Endothelial cell of umbilical vein (primary cell): ENCODE measurements at regions of chr1 and their contacts with region 1.

Region 1: GRCh38 chr1:96236156-96236739 is 485.3 kb upstream of the PTBP2 start:
- DNase-seq: peak; percentile 80
- H3K4me3 ChIP-seq: no peak overlapping the region
- H3K27ac ChIP-seq: no peak overlapping the region
- H3K4me1 ChIP-seq: peaks cover 3% of the 10 kb centered on the region
- H3K27me3 ChIP-seq: peaks cover 2% of the 10 kb centered on the region in 2 experiments
- CTCF ChIP-seq: peak; percentile 40 to 49
- POLR2A ChIP-seq: no peak

Region 2: DNA sequence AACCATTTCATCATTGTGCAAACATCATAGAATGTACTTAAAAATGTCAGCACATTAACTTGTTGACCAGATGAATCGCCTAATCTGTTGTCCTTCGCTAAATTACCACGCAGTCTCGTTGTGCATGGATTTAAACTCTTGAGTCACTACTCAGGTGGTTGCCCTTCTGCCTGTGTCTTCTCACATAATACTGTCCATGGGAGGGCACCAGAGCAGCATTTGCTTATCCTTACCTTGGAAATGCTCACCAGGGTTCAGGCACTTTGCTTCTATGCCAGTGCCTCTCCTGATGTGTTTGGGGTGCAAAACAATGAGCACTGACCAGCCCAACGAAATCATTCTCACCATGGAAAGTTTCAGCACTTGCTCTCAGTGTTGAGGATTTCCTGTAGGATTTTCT is 442.4 kb before region 1 on chr1:
- CTCF ChIA-PET with region 1: no interaction called
- POLR2A ChIA-PET with region 1: no interaction called
- dilution Hi-C with region 1: no loop called
- intact Hi-C with region 1: no loop called
- DNase-seq: no peak
- H3K4me3 ChIP-seq: no peak overlapping the region
- H3K27ac ChIP-seq: no peak overlapping the region
- H3K4me1 ChIP-seq: no peaks in the 10 kb centered on the region
- H3K27me3 ChIP-seq: no peaks in the 10 kb centered on the region
- CTCF ChIP-seq: no peak
- POLR2A ChIP-seq: no peak

Region 3: DNA sequence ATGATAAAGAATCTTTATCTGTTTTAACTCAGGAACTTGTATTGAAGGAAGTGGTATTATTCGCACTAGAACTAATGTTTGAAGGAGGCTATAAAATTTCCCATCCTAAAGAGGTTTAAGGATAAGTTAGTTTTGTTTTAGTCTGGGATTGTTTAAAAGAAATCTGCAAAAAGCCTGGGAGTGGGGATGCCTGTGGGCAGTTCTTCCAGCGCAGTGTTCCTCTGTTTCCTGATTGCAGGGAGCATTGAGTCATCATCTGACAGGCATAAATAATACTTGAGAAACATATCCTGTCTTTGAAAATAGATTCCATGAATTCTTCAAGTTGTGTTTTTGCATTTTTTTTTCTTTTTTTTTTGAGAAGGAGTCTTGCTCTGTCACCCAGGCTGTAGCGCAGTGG is 134.5 kb after region 1 on chr1:
- CTCF ChIA-PET with region 1: no interaction called
- POLR2A ChIA-PET with region 1: no interaction called
- dilution Hi-C with region 1: no loop called
- intact Hi-C with region 1: loop called (anchors 1 kb)
- DNase-seq: peak; percentile 93
- H3K4me3 ChIP-seq: no peak overlapping the region
- H3K27ac ChIP-seq: peak overlapping the region; percentile 83
- H3K4me1 ChIP-seq: peaks cover 33% of the 10 kb centered on the region
- H3K27me3 ChIP-seq: no peaks in the 10 kb centered on the region
- CTCF ChIP-seq: no peak
- POLR2A ChIP-seq: peak; percentile 21

Region 4: GRCh38 chr1:96721416-96722160 is 485.3 kb after region 1 on chr1 and contains the start of gene PTBP2:
- CTCF ChIA-PET with region 1: interaction called, 6 read pairs
- POLR2A ChIA-PET with region 1: no interaction called
- dilution Hi-C with region 1: no loop called
- intact Hi-C with region 1: loop called (anchors 2 kb)
- DNase-seq: peak; percentile 84
- H3K4me3 ChIP-seq: peak within 1 kb of the TSS; percentile 52 to 99 (median 93)
- H3K27ac ChIP-seq: peak within 1 kb of the TSS; percentile 82
- H3K4me1 ChIP-seq: peaks cover 23% of the 10 kb centered on the region
- H3K27me3 ChIP-seq: no peaks in the 10 kb centered on the region
- CTCF ChIP-seq: no peak
- POLR2A ChIP-seq: no peak
- total RNA-seq, gene PTBP2: 21.3 and 27.0 TPM in 2 replicates

Region 5: GRCh38 chr1:96845464-96845863 is 609.2 kb after region 1 on chr1:
- CTCF ChIA-PET with region 1: interaction called, 19 read pairs
- POLR2A ChIA-PET with region 1: no interaction called
- dilution Hi-C with region 1: no loop called
- intact Hi-C with region 1: loop called (anchors 2 kb)
- DNase-seq: peak; percentile 35
- H3K4me3 ChIP-seq: no peak overlapping the region
- H3K27ac ChIP-seq: no peak overlapping the region
- H3K4me1 ChIP-seq: no peaks in the 10 kb centered on the region
- H3K27me3 ChIP-seq: no peaks in the 10 kb centered on the region
- CTCF ChIP-seq: peak; percentile 62 to 76
- POLR2A ChIP-seq: no peak